IMR-90 (cell line): ENCODE measurements at regions of chr3 and their contacts with region 1.

Region 1: GRCh38 chr3:183099026-183099837 is at the start of gene MCCC1:
- DNase-seq: peak; percentile 99
- ATAC-seq: peak; percentile 99
- H3K4me3 ChIP-seq: peak within 1 kb of the TSS; percentile 65
- H3K27ac ChIP-seq: peak within 1 kb of the TSS; percentile 71
- H3K4me1 ChIP-seq: no peaks in the 10 kb centered on the region
- H3K27me3 ChIP-seq: no peaks in the 10 kb centered on the region
- CTCF ChIP-seq: no peak
- POLR2A ChIP-seq: peak; percentile 51; the same call in 1 of the 2 replicates
- RAD21 ChIP-seq: no peak
- total RNA-seq, gene MCCC1: 17.9 and 18.3 TPM in 2 replicates

Region 2: GRCh38 chr3:182810574-182811268 is 288.5 kb before region 1 on chr3:
- CTCF ChIA-PET with region 1: no interaction called
- POLR2A ChIA-PET with region 1: no interaction called
- dilution Hi-C with region 1: no loop called
- in situ Hi-C with region 1: no loop called
- intact Hi-C with region 1: loop called (anchors 10 kb)
- DNase-seq: peak; percentile 58
- ATAC-seq: peak; percentile 71
- H3K4me3 ChIP-seq: no peak overlapping the region
- H3K27ac ChIP-seq: no peak overlapping the region
- H3K4me1 ChIP-seq: peaks cover 1% of the 10 kb centered on the region; the same call in 1 of the 2 replicates
- H3K27me3 ChIP-seq: no peaks in the 10 kb centered on the region
- CTCF ChIP-seq: no peak
- POLR2A ChIP-seq: no peak
- RAD21 ChIP-seq: no peak

Region 3: GRCh38 chr3:182909318-182910040 is 189.8 kb before region 1 on chr3:
- CTCF ChIA-PET with region 1: no interaction called
- POLR2A ChIA-PET with region 1: no interaction called
- dilution Hi-C with region 1: no loop called
- in situ Hi-C with region 1: no loop called
- intact Hi-C with region 1: loop called (anchors 5 kb)
- DNase-seq: no peak
- ATAC-seq: peak; percentile 48; the same call in 1 of the 2 replicates
- H3K4me3 ChIP-seq: no peak overlapping the region
- H3K27ac ChIP-seq: no peak overlapping the region
- H3K4me1 ChIP-seq: peaks cover 14% of the 10 kb centered on the region
- H3K27me3 ChIP-seq: no peaks in the 10 kb centered on the region
- CTCF ChIP-seq: peak; percentile 56
- POLR2A ChIP-seq: no peak
- RAD21 ChIP-seq: peak; percentile 47

Region 4: GRCh38 chr3:182980204-182981037 is 118.8 kb before region 1 on chr3 and contains the start of gene DCUN1D1:
- CTCF ChIA-PET with region 1: no interaction called
- POLR2A ChIA-PET with region 1: no interaction called
- dilution Hi-C with region 1: no loop called
- in situ Hi-C with region 1: no loop called
- intact Hi-C with region 1: loop called (anchors 5 kb)
- DNase-seq: peak; percentile 73
- ATAC-seq: peak; percentile 95
- H3K4me3 ChIP-seq: peak within 1 kb of the TSS; percentile 80
- H3K27ac ChIP-seq: peak within 1 kb of the TSS; percentile 72
- H3K4me1 ChIP-seq: peaks cover 2% of the 10 kb centered on the region
- H3K27me3 ChIP-seq: no peaks in the 10 kb centered on the region
- CTCF ChIP-seq: no peak
- POLR2A ChIP-seq: no peak; the same call in none of the 2 replicates
- RAD21 ChIP-seq: no peak
- total RNA-seq, gene DCUN1D1: 17.7 and 48.9 TPM in 2 replicates

Region 5: DNA sequence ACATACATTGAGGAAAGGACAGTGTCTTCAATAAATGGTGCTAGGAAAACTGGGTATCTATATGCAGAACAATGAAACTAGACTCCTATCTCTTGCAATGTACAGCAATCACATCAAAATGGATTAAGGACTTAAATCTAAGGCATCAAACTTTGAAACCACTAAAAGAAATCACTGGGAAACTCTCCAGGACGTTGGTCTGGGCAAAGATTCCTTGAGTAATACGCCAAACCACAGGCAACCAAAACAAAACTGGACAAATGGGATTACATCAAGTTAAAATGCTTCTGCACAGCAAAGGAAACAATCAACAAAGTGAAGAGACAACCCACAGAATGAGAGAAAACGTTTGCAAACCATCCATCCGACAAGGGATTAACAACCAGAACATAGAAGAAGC is 48.8 kb after region 1 on chr3:
- CTCF ChIA-PET with region 1: no interaction called
- POLR2A ChIA-PET with region 1: no interaction called
- dilution Hi-C with region 1: no loop called
- in situ Hi-C with region 1: no loop called
- intact Hi-C with region 1: no loop called
- DNase-seq: peak; percentile 66
- ATAC-seq: peak; percentile 46; the same call in 1 of the 2 replicates
- H3K4me3 ChIP-seq: no peak overlapping the region
- H3K27ac ChIP-seq: no peak overlapping the region
- H3K4me1 ChIP-seq: no peaks in the 10 kb centered on the region; the same call in 1 of the 2 replicates
- H3K27me3 ChIP-seq: peaks cover 28% of the 10 kb centered on the region
- CTCF ChIP-seq: no peak
- POLR2A ChIP-seq: no peak
- RAD21 ChIP-seq: no peak

Region 6: GRCh38 chr3:183210839-183211341 is 111.7 kb after region 1 on chr3:
- CTCF ChIA-PET with region 1: no interaction called
- POLR2A ChIA-PET with region 1: no interaction called
- dilution Hi-C with region 1: no loop called
- in situ Hi-C with region 1: no loop called
- intact Hi-C with region 1: no loop called
- DNase-seq: no peak
- ATAC-seq: no peak
- H3K4me3 ChIP-seq: no peak overlapping the region
- H3K27ac ChIP-seq: no peak overlapping the region
- H3K4me1 ChIP-seq: no peaks in the 10 kb centered on the region
- H3K27me3 ChIP-seq: peaks cover 32% of the 10 kb centered on the region
- CTCF ChIP-seq: no peak
- POLR2A ChIP-seq: no peak
- RAD21 ChIP-seq: no peak

Region 7: GRCh38 chr3:183328823-183329222 is 229.6 kb after region 1 on chr3:
- CTCF ChIA-PET with region 1: no interaction called
- POLR2A ChIA-PET with region 1: no interaction called
- dilution Hi-C with region 1: no loop called
- in situ Hi-C with region 1: no loop called
- intact Hi-C with region 1: no loop called
- DNase-seq: peak; percentile 17
- ATAC-seq: no peak
- H3K4me3 ChIP-seq: no peak overlapping the region
- H3K27ac ChIP-seq: no peak overlapping the region
- H3K4me1 ChIP-seq: no peaks in the 10 kb centered on the region
- H3K27me3 ChIP-seq: peaks cover 26% of the 10 kb centered on the region
- CTCF ChIP-seq: no peak
- POLR2A ChIP-seq: no peak
- RAD21 ChIP-seq: no peak